Dorsolateral prefrontal cortex (tissue), 120 donors: ENCODE measurements at regions of chr6 and their contacts with region 1.

Region 1: DNA sequence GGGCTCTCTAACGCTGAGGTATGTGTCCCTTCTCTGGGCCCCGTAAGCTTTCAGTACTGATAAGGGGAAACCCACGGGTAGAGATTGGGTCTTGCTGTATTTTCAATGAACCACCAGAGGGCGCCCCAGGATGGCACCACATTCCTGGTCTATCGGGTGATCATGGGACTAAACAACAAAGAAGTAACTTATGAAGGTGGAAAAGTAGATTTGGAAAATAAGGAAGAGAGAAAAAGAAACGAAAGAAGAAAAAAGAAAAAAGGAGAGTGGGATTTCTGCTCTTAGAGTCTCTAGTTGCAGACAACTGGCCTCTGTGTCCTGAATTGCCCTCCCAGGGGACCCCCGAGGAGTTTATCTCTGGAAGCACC is 93.8 kb downstream of the GMPR start:
- DNase-seq: peak; percentile 69 to 90 (median 84)
- H3K4me3 ChIP-seq: peak overlapping the region in 40 of 59 donors; percentile 0 to 47 (median 26)
- H3K27ac ChIP-seq: peak overlapping the region in 54 of 59 donors; percentile 9 to 89 (median 66)
- H3K27me3 ChIP-seq: no peaks in the 10 kb centered on the region
- CTCF ChIP-seq: peak; percentile 87 to 98 (median 94)

Region 2: GRCh38 chr6:15987569-15987968 is 344.6 kb before region 1 on chr6:
- intact Hi-C with region 1: no loop called
- DNase-seq: no peak
- H3K4me3 ChIP-seq: no peak overlapping the region
- H3K27ac ChIP-seq: no peak overlapping the region
- H3K27me3 ChIP-seq: peaks cover 0 to 10% (median 0%) of the 10 kb centered on the region in 45 donors
- CTCF ChIP-seq: no peak

Region 3: DNA sequence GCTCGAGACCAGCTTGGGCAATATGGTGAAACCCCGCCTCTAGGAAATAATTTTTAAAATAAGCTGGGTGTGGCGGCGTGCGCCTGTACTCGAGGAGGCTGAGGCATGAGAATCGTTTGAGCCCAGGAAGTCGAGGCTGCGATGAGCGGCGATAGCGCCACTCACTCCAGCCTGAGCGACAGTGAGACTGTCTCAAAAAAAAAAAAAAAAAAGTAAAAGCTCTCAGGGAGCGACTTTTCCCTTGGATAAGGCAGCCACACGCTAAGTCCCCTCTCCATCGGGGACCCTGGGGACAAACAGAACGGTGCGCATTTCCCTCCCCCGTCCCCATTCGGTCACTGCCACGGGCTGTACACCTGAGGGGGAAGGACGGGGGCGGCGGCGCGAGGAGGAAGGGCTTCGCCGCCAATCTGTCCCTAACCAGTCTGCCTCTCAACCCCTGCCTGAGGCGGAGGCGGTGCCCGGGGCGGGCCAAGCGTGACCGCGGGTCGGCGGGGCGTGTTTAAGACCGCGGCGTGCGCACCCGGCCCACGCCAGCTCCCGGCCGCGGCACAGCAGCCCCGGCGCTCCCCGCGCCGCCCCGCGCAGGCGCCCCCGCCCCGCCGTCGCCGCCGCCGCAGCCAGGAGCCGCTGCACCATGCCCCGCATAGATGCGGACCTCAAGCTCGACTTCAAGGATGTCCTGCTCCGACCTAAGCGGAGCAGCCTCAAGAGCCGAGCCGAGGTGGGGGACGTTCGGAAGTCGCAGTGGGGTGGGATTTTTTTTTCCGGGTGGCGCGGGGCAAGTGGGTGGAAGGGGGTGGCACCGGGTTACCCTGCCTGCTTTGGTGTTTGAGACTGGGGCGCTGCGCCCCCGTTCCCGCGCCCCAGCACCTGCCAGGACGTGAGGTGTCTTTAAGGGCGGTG is 93.8 kb before region 1 on chr6 and contains the start of gene GMPR:
- intact Hi-C with region 1: loop called in 1 of 2 experiments (anchors 5 kb)
- DNase-seq: peak in 7 of 10 donors; percentile 27 to 75 (median 47)
- H3K4me3 ChIP-seq: peak within 1 kb of the TSS; percentile 49 to 84 (median 69)
- H3K27ac ChIP-seq: peak within 1 kb of the TSS in 33 of 59 donors; percentile 4 to 82 (median 51)
- H3K27me3 ChIP-seq: no peaks in the 10 kb centered on the region
- CTCF ChIP-seq: peak in 2 of 56 donors; percentile 2 to 11
- total RNA-seq, gene GMPR: 4.8 to 47.1 (median 16.9) TPM

Region 4: GRCh38 chr6:16409531-16410441 is 77.6 kb after region 1 on chr6:
- intact Hi-C with region 1: loop called (anchors 2 to 5 kb)
- DNase-seq: peak; percentile 39 to 78 (median 64)
- H3K4me3 ChIP-seq: peak overlapping the region in 4 of 59 donors; percentile 5 to 24 (median 18)
- H3K27ac ChIP-seq: peak overlapping the region in 21 of 59 donors; percentile 1 to 53 (median 24)
- H3K27me3 ChIP-seq: no peaks in the 10 kb centered on the region
- CTCF ChIP-seq: peak; percentile 39 to 87 (median 78)

Region 5: DNA sequence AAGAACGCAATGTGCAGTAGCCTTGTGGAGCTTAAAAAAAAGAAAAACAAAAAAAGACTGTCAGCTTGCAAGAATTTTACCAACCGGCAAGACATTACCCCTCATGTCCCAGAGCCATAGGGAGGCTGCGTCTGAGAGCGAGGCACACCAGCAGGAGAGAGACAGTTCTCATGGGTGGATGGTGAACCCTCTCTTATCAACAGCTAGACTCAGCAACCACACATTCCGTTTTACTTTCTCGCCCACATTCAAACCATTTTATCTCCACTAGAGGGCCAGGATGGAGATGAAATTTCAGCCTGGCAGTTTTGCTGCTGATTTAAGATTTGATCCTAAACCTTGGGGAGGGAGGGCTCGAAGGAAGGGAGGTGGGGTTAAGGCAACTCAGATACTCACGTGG is 182.1 kb after region 1 on chr6:
- intact Hi-C with region 1: loop called (anchors 5 kb)
- DNase-seq: peak in 3 of 10 donors; percentile 5 to 48 (median 41)
- H3K4me3 ChIP-seq: peak overlapping the region in 46 of 59 donors; percentile 4 to 56 (median 31)
- H3K27ac ChIP-seq: peak overlapping the region in 57 of 59 donors; percentile 2 to 87 (median 68)
- H3K27me3 ChIP-seq: no peaks in the 10 kb centered on the region
- CTCF ChIP-seq: peak; percentile 26 to 76 (median 64)

Region 6: GRCh38 chr6:16964553-16965501 is 632.7 kb after region 1 on chr6:
- intact Hi-C with region 1: loop called in 1 of 2 experiments (anchors 5 kb)
- DNase-seq: peak; percentile 64 to 86 (median 76)
- H3K4me3 ChIP-seq: peak overlapping the region in 55 of 59 donors; percentile 2 to 63 (median 40)
- H3K27ac ChIP-seq: peak overlapping the region in 10 of 59 donors; percentile 7 to 84 (median 28)
- H3K27me3 ChIP-seq: peaks cover 0 to 4% (median 0%) of the 10 kb centered on the region in 45 donors
- CTCF ChIP-seq: peak; percentile 57 to 95 (median 91)